Calu3 (cell line): ENCODE measurements at regions of chr5 and their contacts with region 1.

Region 1: GRCh38 chr5:53035868-53036381 is 46.8 kb downstream of the ITGA2 start:
- DNase-seq: peak; percentile 38
- H3K4me3 Mint-ChIP-seq: no peak overlapping the region
- H3K27ac Mint-ChIP-seq: peak overlapping the region; percentile 74
- H3K4me1 Mint-ChIP-seq: peaks cover 72% of the 10 kb centered on the region
- H3K27me3 Mint-ChIP-seq: no peaks in the 10 kb centered on the region
- CTCF ChIP-seq: peak; percentile 62

Region 2: GRCh38 chr5:52989781-52990527 is 46.0 kb before region 1 on chr5:
- CTCF ChIA-PET with region 1: interaction called, 5 read pairs
- intact Hi-C with region 1: loop called (anchors 5 kb)
- DNase-seq: peak; percentile 46
- H3K4me3 Mint-ChIP-seq: peak overlapping the region; percentile 77
- H3K27ac Mint-ChIP-seq: peak overlapping the region; percentile 69
- H3K4me1 Mint-ChIP-seq: peaks cover 52% of the 10 kb centered on the region
- H3K27me3 Mint-ChIP-seq: no peaks in the 10 kb centered on the region
- CTCF ChIP-seq: no peak

Region 3: DNA sequence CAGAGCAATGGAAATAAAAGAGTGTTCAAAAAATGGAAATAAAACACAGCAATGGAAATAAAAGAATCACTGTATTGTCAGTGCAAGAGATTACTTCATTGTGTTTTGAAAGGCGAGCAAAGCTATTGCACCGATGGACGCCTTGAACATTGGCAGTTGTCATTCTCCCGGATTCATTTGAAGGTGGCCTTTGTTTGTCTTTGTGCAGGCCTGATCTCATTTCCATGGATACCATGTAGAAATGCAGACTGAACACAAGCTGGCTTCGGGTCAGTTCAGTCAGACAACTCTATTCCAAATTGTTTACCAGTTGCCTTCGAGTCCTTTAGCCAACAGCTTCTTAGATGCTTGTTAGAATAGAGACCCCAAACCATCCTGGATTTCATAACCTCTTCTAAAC is 38.5 kb before region 1 on chr5:
- CTCF ChIA-PET with region 1: interaction called, 3 read pairs
- intact Hi-C with region 1: loop called (anchors 5 kb)
- DNase-seq: peak; percentile 23
- H3K4me3 Mint-ChIP-seq: peak overlapping the region; percentile 21
- H3K27ac Mint-ChIP-seq: peak overlapping the region; percentile 13
- H3K4me1 Mint-ChIP-seq: peaks cover 13% of the 10 kb centered on the region
- H3K27me3 Mint-ChIP-seq: no peaks in the 10 kb centered on the region
- CTCF ChIP-seq: no peak